Activated CD4-positive, alpha-beta T cell treated with anti-CD3 and anti-CD28 coated beads for 36 hours (primary cell): ENCODE measurements at regions of chr6 and their contacts with region 1.

Region 1: DNA sequence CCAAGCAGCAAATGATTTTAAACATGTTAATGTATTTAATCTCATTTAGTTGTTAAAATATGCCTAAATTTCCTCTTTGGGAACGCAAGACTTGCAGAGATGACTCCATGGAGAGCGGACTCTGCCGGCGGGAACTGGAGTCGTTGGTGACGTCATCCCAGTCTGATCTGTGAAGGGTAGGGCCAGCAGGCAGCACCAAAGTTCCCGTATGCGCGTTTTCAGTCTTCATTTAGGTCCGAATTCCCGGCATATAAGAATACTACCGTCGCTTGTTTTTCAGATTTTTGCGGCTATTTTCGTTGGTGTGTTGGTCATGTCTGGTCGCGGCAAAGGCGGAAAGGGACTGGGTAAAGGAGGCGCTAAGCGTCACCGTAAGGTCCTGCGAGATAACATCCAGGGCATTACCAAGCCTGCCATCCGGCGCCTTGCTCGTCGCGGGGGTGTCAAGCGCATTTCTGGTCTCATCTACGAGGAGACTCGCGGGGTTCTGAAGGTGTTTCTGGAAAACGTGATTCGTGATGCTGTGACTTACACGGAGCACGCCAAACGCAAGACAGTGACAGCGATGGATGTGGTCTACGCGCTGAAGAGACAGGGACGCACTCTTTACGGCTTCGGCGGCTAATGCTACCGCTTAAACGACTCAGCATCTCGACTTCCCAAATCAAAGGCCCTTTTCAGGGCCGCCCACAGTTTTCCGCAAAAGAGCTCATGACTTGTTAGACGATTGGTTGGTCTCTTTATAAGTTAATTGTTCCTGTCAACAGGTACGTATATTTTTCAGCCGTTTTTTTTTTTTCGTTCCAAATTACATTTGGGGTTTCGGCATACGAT is 117.3 kb downstream of the HFE start:
- DNase-seq: peak; percentile 92
- ATAC-seq: peak; percentile 69
- H3K4me3 Mint-ChIP-seq: no peak overlapping the region
- H3K27ac Mint-ChIP-seq: no peak overlapping the region
- H3K4me1 Mint-ChIP-seq: peaks cover 20% of the 10 kb centered on the region
- H3K27me3 Mint-ChIP-seq: no peaks in the 10 kb centered on the region

Region 2: DNA sequence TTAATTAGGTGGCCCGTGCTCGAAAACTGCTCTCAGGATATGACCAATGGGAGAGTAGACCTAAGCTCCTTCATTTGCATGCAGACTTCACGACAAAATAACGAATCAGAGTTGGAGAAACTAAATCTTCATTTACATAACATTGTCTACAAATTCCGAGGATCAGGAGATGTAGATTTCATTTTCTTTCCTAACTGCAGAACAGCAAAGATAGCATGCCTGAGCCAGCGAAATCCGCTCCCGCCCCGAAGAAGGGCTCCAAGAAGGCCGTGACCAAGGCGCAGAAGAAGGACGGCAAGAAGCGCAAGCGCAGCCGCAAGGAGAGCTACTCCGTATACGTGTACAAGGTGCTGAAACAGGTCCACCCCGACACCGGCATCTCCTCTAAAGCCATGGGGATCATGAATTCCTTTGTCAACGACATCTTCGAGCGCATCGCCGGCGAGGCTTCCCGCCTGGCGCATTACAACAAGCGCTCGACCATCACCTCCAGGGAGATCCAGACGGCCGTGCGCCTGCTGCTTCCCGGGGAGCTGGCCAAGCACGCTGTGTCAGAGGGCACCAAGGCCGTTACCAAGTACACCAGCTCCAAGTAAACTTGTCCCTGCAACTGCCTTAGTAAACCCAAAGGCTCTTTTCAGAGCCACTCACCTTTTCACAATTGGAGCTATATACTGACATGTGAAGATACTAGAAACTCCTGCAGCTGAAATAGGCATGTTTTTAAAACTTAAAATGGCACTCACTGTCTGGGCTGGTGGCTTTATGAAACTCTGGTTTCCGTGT is 20.8 kb before region 1 on chr6:
- CTCF ChIA-PET with region 1: interaction called, 16 read pairs
- POLR2A ChIA-PET with region 1: interaction called, 126 read pairs
- intact Hi-C with region 1: no loop called
- DNase-seq: peak; percentile 82
- ATAC-seq: peak; percentile 80
- H3K4me3 Mint-ChIP-seq: peak overlapping the region; percentile 89
- H3K27ac Mint-ChIP-seq: peak overlapping the region; percentile 92
- H3K4me1 Mint-ChIP-seq: peaks cover 45% of the 10 kb centered on the region
- H3K27me3 Mint-ChIP-seq: no peaks in the 10 kb centered on the region

Region 3: GRCh38 chr6:26240154-26241032 is 35.8 kb after region 1 on chr6:
- CTCF ChIA-PET with region 1: interaction called, 4 read pairs
- POLR2A ChIA-PET with region 1: interaction called, 131 read pairs
- intact Hi-C with region 1: loop called in 1 of 2 experiments (anchors 1 kb)
- DNase-seq: peak; percentile 85
- ATAC-seq: peak; percentile 83
- H3K4me3 Mint-ChIP-seq: peak overlapping the region; percentile 83
- H3K27ac Mint-ChIP-seq: peak overlapping the region; percentile 98
- H3K4me1 Mint-ChIP-seq: peaks cover 26% of the 10 kb centered on the region
- H3K27me3 Mint-ChIP-seq: no peaks in the 10 kb centered on the region

Region 4: DNA sequence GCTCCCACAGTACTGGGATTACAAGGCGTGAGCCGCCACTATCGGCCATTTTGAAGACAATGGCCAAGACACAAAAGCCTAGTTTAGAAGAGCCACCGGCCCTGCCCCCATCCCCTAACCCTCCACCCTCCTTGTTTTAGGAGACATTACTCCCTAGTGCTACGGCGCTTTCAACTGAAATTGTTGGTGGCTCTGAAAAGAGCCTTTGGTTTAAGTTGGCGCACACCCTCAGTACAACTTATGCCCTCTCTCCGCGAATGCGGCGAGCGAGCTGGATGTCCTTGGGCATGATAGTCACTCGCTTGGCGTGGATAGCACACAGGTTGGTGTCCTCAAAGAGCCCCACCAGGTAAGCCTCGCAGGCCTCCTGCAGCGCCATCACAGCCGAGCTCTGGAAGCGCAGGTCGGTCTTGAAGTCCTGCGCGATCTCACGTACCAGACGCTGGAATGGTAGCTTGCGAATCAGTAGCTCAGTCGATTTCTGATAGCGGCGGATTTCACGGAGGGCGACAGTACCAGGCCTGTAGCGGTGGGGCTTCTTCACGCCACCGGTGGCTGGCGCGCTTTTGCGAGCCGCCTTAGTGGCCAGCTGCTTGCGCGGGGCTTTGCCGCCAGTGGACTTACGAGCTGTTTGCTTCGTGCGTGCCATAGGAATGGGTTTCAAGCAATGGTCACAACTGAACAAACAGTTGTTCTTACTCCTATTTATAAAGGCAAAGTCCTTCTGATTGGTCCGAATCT is 45.6 kb after region 1 on chr6:
- CTCF ChIA-PET with region 1: interaction called, 3 read pairs
- POLR2A ChIA-PET with region 1: interaction called, 62 read pairs
- intact Hi-C with region 1: loop called in 1 of 2 experiments (anchors 1 kb)
- DNase-seq: peak; percentile 85
- ATAC-seq: peak; percentile 63
- H3K4me3 Mint-ChIP-seq: peak overlapping the region; percentile 86
- H3K27ac Mint-ChIP-seq: peak overlapping the region; percentile 97
- H3K4me1 Mint-ChIP-seq: peaks cover 14% of the 10 kb centered on the region
- H3K27me3 Mint-ChIP-seq: no peaks in the 10 kb centered on the region